Dorsolateral prefrontal cortex (tissue), 120 donors: ENCODE measurements at regions of chr6 and their contacts with region 1.

Region 1: GRCh38 chr6:34887753-34888513 is at the start of gene TAF11:
- DNase-seq: peak; percentile 89 to 94 (median 93)
- H3K4me3 ChIP-seq: peak within 1 kb of the TSS; percentile 57 to 100 (median 89)
- H3K27ac ChIP-seq: peak within 1 kb of the TSS; percentile 18 to 94 (median 84)
- H3K27me3 ChIP-seq: no peaks in the 10 kb centered on the region
- CTCF ChIP-seq: peak in 19 of 56 donors; percentile 8 to 43 (median 24)
- total RNA-seq, gene TAF11: 14.9 to 28.0 (median 20.9) TPM

Region 2: DNA sequence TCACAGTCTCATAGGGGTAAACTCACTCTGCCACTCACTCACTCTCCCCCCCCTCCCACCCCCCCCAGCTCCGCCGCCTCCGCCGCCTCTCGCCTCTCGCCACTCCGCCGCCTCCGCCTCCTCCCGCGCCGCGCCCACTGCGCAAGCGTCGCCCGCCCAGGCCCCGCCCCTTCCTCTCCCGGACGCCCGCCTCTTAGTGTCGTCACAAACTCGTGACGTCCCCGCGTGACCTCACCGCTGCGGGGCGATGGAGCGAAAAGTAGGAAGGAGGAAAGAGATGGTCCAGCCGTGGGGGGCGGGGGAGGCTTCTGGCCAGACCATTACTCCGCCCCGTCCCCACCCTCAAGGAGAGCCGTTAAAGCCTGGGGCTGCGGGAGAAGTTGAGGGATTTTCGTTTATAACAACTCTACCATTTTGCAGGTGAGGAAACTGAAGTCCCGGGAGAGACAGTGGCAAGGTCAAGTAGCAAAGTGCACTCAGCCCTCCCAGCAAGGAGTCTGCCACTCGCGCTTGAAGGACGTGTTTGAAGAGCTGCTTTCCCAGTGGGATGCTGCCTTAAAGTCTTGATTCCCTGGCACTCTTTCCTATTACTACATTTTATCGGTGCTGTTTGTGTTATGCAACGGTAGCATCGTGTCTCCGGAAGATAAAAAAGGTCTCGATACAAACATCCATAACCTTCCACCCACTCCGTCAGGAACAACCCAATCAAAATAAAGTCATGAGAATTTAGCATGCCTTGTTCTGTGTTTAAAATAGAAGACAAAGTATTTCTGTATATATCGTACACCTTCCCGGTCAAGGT is 191.0 kb before region 1 on chr6 and contains the start of gene ILRUN:
- intact Hi-C with region 1: loop called in 1 of 2 experiments (anchors 5 kb)
- DNase-seq: peak; percentile 92 to 98 (median 96)
- H3K4me3 ChIP-seq: peak within 1 kb of the TSS; percentile 63 to 100 (median 95)
- H3K27ac ChIP-seq: peak within 1 kb of the TSS; percentile 63 to 98 (median 91)
- H3K27me3 ChIP-seq: no peaks in the 10 kb centered on the region
- CTCF ChIP-seq: peak in 5 of 56 donors; percentile 2 to 32 (median 6)
- total RNA-seq, gene ILRUN: 46.6 to 155 (median 106) TPM

Region 3: DNA sequence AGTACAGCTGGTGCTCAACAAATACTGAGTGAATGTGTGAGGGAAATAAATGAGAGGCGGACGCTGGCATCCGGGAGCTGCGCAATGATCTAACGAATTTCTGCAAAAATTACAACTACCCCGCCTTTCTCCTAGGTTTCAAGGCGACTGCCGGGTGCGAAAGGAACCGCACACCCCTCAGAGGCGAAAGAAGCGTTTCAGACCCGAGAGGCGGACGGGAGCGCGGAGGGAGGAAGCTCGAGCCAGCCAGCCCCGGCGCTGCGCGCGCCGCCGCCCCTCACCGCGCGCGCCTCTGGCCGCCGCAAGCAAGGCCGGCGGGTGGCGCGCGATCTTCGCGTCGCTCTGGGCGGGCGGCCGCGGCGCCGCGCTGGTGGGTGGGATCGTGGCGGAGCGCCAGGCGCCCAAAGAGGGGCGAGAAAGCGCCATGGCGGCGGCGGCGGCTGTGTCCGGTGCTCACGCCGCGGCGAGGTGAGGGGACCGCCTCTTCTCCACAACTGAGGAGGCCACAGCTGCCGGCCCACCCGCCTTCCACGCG is 96.2 kb before region 1 on chr6 and contains the start of gene BLTP3A:
- intact Hi-C with region 1: loop called (anchors 2 to 5 kb)
- DNase-seq: peak; percentile 33 to 81 (median 54)
- H3K4me3 ChIP-seq: peak within 1 kb of the TSS; percentile 62 to 98 (median 91)
- H3K27ac ChIP-seq: peak within 1 kb of the TSS in 58 of 59 donors; percentile 66 to 97 (median 93)
- H3K27me3 ChIP-seq: no peaks in the 10 kb centered on the region
- CTCF ChIP-seq: peak in 24 of 56 donors; percentile 2 to 52 (median 26)
- total RNA-seq, gene BLTP3A: 9.5 to 19.4 (median 14.4) TPM

Region 4: GRCh38 chr6:34964564-34964963 is 76.6 kb after region 1 on chr6:
- intact Hi-C with region 1: no loop called
- DNase-seq: no peak
- H3K4me3 ChIP-seq: no peak overlapping the region
- H3K27ac ChIP-seq: no peak overlapping the region
- H3K27me3 ChIP-seq: no peaks in the 10 kb centered on the region
- CTCF ChIP-seq: no peak

Region 5: DNA sequence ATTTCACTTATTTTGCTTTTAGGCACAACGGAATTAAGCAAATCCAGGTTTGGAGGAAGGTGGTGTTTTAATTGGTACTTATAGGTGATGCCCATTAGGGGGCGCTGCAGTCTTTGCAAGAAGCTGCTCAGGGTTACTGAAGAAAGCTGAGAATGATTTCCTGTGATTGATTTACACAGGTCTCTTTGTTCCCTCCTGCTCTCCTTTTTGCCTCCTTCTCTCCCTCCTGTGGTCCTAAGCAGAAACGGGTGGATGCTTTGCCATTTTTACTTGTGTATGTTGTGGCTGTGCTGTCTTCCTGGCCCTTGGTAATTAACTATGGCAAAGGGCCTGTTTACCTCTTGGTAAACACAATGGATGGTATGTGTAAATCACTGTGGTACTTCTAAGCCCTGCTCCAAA is 98.9 kb after region 1 on chr6:
- intact Hi-C with region 1: loop called in 1 of 2 experiments (anchors 5 kb)
- DNase-seq: peak; percentile 44 to 76 (median 62)
- H3K4me3 ChIP-seq: no peak overlapping the region
- H3K27ac ChIP-seq: peak overlapping the region in 57 of 59 donors; percentile 21 to 88 (median 69)
- H3K27me3 ChIP-seq: no peaks in the 10 kb centered on the region
- CTCF ChIP-seq: peak; percentile 83 to 99 (median 92)

Region 6: GRCh38 chr6:35259194-35259947 is 371.4 kb after region 1 on chr6 and contains the start of gene ZNF76:
- intact Hi-C with region 1: loop called in 1 of 2 experiments (anchors 5 kb)
- DNase-seq: peak; percentile 94 to 99 (median 98)
- H3K4me3 ChIP-seq: peak within 1 kb of the TSS; percentile 71 to 100 (median 93)
- H3K27ac ChIP-seq: peak within 1 kb of the TSS; percentile 80 to 99 (median 96)
- H3K27me3 ChIP-seq: no peaks in the 10 kb centered on the region
- CTCF ChIP-seq: peak in 26 of 56 donors; percentile 5 to 49 (median 25)
- total RNA-seq, gene ZNF76: 28.7 to 73.1 (median 45.8) TPM